PC-3 (cell line): ENCODE measurements at regions of chr16 and their contacts with region 1.

Region 1: DNA sequence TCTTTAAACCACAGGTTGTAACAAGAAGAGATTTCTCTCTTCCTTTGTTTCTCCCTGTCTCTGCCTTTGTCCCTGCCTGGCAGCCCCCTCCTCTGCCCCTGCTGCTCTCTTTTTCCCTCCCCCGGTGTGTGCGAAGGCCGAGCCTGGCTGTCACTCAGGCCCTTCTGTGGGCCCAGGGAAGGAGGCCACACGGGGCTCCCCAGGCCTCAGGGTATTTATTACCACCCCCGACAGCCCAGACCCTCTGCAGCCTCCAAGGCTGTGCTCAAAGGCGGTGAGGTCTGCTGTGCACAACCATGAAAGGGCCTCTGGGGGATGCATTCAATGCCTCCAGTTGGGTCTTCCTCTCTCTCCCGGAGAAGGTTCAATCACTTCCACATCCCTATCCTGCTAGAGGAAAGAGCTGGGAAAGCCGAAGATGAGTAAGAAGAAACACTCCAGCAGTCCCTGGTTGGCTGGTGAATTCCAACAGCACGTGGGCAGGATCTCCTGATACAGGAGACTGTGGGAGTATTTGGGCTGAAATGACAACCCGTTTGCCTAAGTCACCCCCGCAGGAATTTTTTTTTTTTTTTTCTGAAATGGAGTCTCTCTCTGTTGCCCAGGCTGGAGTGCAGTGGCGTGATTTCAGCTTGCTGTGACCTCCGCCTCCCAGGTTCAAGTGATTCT is 34.2 kb downstream of the ZNF423 start:
- DNase-seq: no peak
- ATAC-seq: no peak
- H3K4me3 ChIP-seq: no peak overlapping the region
- H3K27ac ChIP-seq: no peak overlapping the region
- H3K4me1 ChIP-seq: no peaks in the 10 kb centered on the region
- H3K27me3 ChIP-seq: peaks cover 29% of the 10 kb centered on the region
- CTCF ChIP-seq: no peak

Region 2: GRCh38 chr16:49800876-49801275 is 20.9 kb before region 1 on chr16:
- CTCF ChIA-PET with region 1: interaction called, 13 read pairs
- POLR2A ChIA-PET with region 1: no interaction called
- intact Hi-C with region 1: no loop called
- DNase-seq: no peak
- ATAC-seq: no peak
- H3K4me3 ChIP-seq: no peak overlapping the region
- H3K27ac ChIP-seq: no peak overlapping the region
- H3K4me1 ChIP-seq: no peaks in the 10 kb centered on the region
- H3K27me3 ChIP-seq: 0 out of 2 replicates have a peak, but pooled peaks cover 6% of the 10 kb centered on the region
- CTCF ChIP-seq: no peak